PC-3 (cell line): ENCODE measurements at regions of chr19 and their contacts with region 1.

Region 1: GRCh38 chr19:53792721-53793433 is 31.2 kb downstream of the NLRP12 start:
- DNase-seq: peak; percentile 96
- ATAC-seq: peak; percentile 100
- H3K4me3 ChIP-seq: no peak overlapping the region
- H3K27ac ChIP-seq: no peak overlapping the region
- H3K4me1 ChIP-seq: no peaks in the 10 kb centered on the region
- H3K27me3 ChIP-seq: no peaks in the 10 kb centered on the region
- CTCF ChIP-seq: peak; percentile 99

Region 2: DNA sequence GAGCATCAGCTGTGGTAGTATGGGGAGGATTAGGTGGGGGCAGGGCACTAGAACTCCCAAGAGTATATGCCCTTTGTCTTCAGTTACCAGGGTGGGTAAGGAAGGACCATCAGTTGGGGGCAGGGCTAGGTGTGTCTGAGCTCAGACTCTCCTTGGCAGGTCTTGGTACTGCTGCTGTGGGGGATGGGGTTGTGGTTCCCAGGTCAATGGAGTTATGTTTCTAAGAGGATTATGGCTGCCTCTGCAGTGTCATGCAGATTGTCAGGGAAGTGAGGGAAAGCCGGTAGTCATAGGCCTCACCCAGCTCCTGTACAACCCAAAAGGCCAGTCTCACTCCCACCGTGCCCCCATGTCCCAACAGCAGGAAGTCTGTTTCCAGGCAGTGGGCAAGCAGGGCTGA is 1348.4 kb before region 1 on chr19:
- CTCF ChIA-PET with region 1: no interaction called
- POLR2A ChIA-PET with region 1: no interaction called
- intact Hi-C with region 1: no loop called
- DNase-seq: no peak
- ATAC-seq: no peak
- H3K4me3 ChIP-seq: no peak overlapping the region
- H3K27ac ChIP-seq: no peak overlapping the region
- H3K4me1 ChIP-seq: no peaks in the 10 kb centered on the region
- H3K27me3 ChIP-seq: no peaks in the 10 kb centered on the region
- CTCF ChIP-seq: no peak

Region 3: DNA sequence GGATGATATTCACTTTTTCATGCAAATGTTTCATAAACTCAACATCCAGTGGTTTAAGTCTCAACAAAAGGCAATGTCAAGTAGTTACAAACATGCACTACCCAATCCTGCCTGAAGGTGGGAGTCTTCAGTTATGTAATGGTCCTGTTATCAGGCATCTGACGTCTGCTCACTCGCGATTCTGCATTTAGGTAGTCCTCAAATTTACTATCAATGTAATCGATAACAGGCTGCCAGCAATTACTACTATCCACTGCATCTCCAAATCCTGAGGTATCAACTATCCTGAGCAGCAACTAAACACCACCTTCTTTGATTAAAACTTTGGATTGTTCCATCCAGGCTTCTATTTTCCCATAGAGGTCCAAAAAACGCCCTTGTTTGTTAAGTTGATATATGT is 19.9 kb before region 1 on chr19:
- CTCF ChIA-PET with region 1: interaction called, 5 read pairs
- POLR2A ChIA-PET with region 1: no interaction called
- intact Hi-C with region 1: loop called (anchors 1 kb)
- DNase-seq: peak; percentile 87
- ATAC-seq: peak; percentile 89
- H3K4me3 ChIP-seq: no peak overlapping the region
- H3K27ac ChIP-seq: no peak overlapping the region
- H3K4me1 ChIP-seq: peaks cover 8% of the 10 kb centered on the region; the same call in 1 of the 2 replicates
- H3K27me3 ChIP-seq: 0 out of 2 replicates have a peak, but pooled peaks cover under 1% of the 10 kb centered on the region
- CTCF ChIP-seq: peak; percentile 85

Region 4: GRCh38 chr19:53818756-53819155 is 25.9 kb after region 1 on chr19:
- CTCF ChIA-PET with region 1: no interaction called
- POLR2A ChIA-PET with region 1: no interaction called
- intact Hi-C with region 1: no loop called
- DNase-seq: no peak
- ATAC-seq: no peak
- H3K4me3 ChIP-seq: no peak overlapping the region
- H3K27ac ChIP-seq: no peak overlapping the region
- H3K4me1 ChIP-seq: no peaks in the 10 kb centered on the region
- H3K27me3 ChIP-seq: no peaks in the 10 kb centered on the region
- CTCF ChIP-seq: no peak

Region 5: DNA sequence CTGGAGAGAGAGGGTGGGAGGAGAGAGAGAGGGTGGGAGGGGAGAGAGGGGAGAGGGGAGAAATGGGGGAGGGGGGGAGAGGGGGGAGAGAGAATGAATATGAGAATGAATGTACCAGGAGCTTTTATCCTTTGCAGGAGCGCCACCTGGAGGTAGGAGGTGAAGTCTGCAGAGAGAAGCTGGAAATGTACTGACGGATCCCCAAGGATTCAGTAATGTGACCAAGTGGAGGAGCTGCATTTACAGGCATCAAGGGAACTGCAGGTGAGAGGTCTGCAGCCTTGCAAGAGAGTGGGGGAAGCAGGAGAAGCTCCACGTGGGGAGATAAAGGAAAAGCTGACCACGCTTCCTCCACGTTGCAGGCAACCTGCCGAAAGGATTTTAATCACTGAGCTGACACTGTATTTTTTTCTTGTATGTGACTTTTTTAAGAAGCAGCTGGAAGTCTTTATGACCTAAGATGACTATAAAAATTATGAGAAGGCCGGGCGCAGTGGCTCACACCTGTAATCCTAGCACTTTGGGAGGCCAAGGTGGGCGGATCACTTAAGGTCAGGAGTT is 237.1 kb after region 1 on chr19:
- CTCF ChIA-PET with region 1: interaction called, 20 read pairs
- POLR2A ChIA-PET with region 1: no interaction called
- intact Hi-C with region 1: loop called (anchors 1 kb)
- DNase-seq: peak; percentile 94
- ATAC-seq: peak; percentile 79
- H3K4me3 ChIP-seq: no peak overlapping the region
- H3K27ac ChIP-seq: no peak overlapping the region
- H3K4me1 ChIP-seq: peaks cover 21% of the 10 kb centered on the region
- H3K27me3 ChIP-seq: no peaks in the 10 kb centered on the region
- CTCF ChIP-seq: peak; percentile 80

Region 6: DNA sequence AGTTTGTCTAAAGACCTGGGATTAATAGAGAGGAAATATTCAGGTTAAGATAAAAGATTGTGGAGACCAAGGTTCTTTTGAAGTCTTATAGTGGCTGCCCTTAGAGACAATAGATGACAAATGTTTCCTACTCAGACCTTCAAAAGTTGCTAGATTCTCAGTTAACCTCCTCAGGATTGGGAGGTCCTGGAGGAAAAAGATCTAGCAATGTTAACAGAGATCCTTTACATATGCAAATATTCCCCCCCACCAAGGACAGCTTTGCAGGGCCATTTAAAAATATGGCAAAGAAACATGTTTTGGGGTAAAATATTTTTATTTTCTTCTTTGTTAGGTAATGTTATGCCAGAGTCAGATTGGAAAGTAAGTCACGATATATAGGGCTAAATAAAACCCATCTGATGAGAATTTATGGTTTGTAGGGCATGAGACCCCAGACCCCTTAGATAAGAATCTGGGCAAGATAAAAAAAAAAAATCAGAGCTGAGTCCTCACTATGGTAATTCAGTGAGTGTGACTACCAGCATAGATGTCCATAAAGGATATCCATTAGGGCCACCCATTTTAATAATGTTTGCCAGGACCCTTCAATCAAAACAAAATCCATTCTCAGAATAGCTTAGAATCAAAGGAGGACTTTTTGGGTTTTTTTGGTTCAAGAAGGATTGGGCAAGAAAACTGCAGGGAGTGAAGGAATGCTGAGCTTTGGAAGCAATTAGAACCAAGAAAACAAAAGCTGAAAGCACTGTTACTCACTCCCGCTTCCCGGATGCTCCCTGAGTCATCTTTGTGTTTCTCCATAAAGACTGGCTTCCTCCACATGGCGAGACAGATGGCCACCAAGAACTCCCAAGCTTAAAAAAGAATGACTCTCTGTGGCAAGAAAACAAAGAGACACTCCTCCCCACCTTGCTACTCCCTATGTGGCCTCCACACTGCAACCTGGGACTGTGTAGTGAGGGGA is 242.6 kb after region 1 on chr19:
- CTCF ChIA-PET with region 1: interaction called, 20 read pairs
- POLR2A ChIA-PET with region 1: no interaction called
- intact Hi-C with region 1: loop called (anchors 1 kb)
- DNase-seq: peak; percentile 91
- ATAC-seq: peak; percentile 89
- H3K4me3 ChIP-seq: no peak overlapping the region
- H3K27ac ChIP-seq: peak overlapping the region; percentile 79
- H3K4me1 ChIP-seq: peaks cover 25% of the 10 kb centered on the region
- H3K27me3 ChIP-seq: no peaks in the 10 kb centered on the region
- CTCF ChIP-seq: no peak

Region 7: DNA sequence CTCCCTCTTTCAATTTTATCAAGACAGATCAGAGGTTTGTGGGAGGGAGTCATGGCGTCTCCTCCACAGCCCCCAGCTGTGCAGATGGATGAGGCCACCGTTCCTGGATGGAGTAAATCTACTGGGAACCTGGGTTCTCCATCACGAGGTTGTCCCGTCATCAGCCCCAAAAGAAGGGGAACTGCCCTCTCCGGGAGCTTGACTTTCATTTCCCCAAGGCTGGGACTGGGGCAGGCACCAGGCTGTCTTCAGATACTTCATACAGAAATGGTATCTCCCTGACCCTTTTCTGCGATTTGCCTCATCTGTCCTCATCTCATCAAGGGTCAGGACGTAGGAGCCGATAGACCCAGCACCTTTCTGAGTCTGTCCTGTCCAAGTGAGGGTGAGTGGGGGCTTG is 478.2 kb after region 1 on chr19:
- CTCF ChIA-PET with region 1: no interaction called
- POLR2A ChIA-PET with region 1: no interaction called
- intact Hi-C with region 1: no loop called
- DNase-seq: no peak
- ATAC-seq: no peak
- H3K4me3 ChIP-seq: no peak overlapping the region
- H3K27ac ChIP-seq: no peak overlapping the region
- H3K4me1 ChIP-seq: no peaks in the 10 kb centered on the region
- H3K27me3 ChIP-seq: peaks cover 78% of the 10 kb centered on the region
- CTCF ChIP-seq: no peak